Pancreas (tissue), 10 donors: ENCODE measurements at regions of chr7 and their contacts with region 1.

Region 1: GRCh38 chr7:92447345-92448204 is at the start of gene GATAD1:
- DNase-seq: peak; percentile 91 to 96 (median 94)
- ATAC-seq: peak; percentile 95 to 99 (median 96)
- H3K4me3 ChIP-seq: peak within 1 kb of the TSS; percentile 84 to 99 (median 97)
- H3K27ac ChIP-seq: peak within 1 kb of the TSS; percentile 94 to 99 (median 98)
- H3K4me1 ChIP-seq: peaks cover 13 to 17% (median 15%) of the 10 kb centered on the region in 3 donors
- H3K27me3 ChIP-seq: no peaks in the 10 kb centered on the region
- CTCF ChIP-seq: peak in 3 of 4 donors; percentile 89 to 92 (median 90)
- total RNA-seq, gene GATAD1: 16.5 to 21.2 (median 20.0) TPM

Region 2: DNA sequence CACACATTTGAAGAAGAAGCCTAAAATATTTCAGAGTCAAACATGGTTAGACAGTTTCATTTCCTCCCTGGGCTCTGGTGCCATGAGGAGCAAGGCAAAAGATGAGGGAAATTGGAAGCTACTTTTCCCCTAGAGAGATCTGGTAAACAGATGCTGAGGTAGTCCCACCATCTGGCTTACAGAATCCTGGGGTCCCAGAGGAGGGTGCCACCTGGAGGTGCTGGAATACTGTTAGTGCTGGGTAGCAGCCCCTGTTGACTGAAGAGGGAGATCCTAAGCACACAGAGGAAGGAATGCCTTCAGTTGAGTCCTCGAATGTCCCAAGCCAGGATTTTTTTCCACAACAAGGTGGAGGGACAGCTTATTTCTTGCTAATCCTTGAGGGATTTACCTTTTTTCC is 1023.2 kb before region 1 on chr7:
- intact Hi-C with region 1: no loop called
- DNase-seq: no peak
- ATAC-seq: no peak
- H3K4me3 ChIP-seq: no peak overlapping the region
- H3K27ac ChIP-seq: no peak overlapping the region
- H3K4me1 ChIP-seq: no peaks in the 10 kb centered on the region
- H3K27me3 ChIP-seq: no peaks in the 10 kb centered on the region
- CTCF ChIP-seq: no peak

Region 3: DNA sequence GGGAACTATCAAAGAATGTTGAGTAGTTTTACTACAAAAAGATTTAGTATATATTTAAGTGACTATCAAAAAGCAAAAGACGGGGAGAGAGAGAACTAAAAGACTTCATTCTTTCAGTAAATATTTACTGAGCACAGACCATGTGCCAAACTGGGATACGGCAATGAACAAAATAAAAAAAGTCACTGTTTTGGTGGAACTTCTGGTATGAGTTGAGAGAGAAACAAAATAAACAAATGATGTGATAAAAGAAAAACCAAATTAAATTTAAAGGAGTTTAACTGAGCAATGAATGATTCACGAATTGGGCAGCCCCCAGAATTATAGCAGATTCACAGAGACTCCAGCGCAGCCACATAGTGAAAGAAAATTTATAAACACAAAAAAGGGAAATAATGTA is 524.7 kb before region 1 on chr7:
- intact Hi-C with region 1: no loop called
- DNase-seq: no peak
- ATAC-seq: no peak
- H3K4me3 ChIP-seq: no peak overlapping the region
- H3K27ac ChIP-seq: no peak overlapping the region
- H3K4me1 ChIP-seq: no peaks in the 10 kb centered on the region
- H3K27me3 ChIP-seq: no peaks in the 10 kb centered on the region
- CTCF ChIP-seq: no peak

Region 4: DNA sequence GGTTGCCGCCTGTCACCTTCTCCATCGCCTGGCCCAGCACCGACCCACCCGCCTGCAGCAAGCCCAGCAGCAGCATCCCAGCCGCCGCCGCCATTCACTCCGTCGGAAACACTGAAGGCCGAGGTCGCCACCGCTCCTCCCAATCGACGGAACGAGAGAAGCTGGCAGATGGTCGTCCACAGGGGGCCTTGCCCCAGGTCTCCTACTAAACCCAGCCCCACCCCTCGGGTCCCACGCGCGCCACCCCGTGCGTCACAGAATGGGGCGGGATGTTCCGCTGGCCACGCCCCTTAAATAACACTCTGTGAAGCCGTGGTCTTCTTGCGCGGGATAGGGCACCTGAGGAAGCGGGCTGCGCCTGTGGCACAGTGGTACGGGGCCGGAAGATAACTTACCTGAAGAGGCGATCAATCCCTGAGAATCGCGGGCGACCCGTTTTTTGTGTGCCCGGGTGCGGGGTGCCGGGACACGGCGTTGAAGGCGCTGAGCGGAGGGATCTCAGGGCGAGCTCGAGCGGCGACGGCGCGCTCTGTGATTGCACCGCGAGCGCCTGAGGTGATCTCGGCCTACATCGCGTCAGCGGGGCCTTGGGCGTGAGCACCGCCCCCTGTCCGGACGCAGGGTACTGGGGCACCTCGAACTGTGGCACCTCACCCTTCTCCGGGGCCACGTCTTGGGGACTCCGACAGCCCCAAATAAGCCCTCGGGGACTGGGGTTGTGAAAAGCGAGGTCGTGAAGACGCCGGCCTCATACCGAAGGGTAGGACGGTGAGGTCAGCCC is 313.1 kb before region 1 on chr7 and contains the start of gene CYP51A1:
- intact Hi-C with region 1: loop called in 1 of 3 experiments (anchors 10 kb)
- DNase-seq: peak; percentile 88 to 96 (median 92)
- ATAC-seq: peak; percentile 93 to 98 (median 93)
- H3K4me3 ChIP-seq: peak within 1 kb of the TSS; percentile 62 to 99 (median 85)
- H3K27ac ChIP-seq: peak within 1 kb of the TSS; percentile 92 to 98 (median 95)
- H3K4me1 ChIP-seq: peaks cover 0 to 15% (median 4%) of the 10 kb centered on the region in 3 donors
- H3K27me3 ChIP-seq: no peaks in the 10 kb centered on the region
- CTCF ChIP-seq: peak in 1 of 4 donors; percentile 5
- total RNA-seq, gene CYP51A1: 24.0 to 43.5 (median 36.4) TPM